Endothelial cell of umbilical vein (primary cell): ENCODE measurements at regions of chr19 and their contacts with region 1.

Region 1: DNA sequence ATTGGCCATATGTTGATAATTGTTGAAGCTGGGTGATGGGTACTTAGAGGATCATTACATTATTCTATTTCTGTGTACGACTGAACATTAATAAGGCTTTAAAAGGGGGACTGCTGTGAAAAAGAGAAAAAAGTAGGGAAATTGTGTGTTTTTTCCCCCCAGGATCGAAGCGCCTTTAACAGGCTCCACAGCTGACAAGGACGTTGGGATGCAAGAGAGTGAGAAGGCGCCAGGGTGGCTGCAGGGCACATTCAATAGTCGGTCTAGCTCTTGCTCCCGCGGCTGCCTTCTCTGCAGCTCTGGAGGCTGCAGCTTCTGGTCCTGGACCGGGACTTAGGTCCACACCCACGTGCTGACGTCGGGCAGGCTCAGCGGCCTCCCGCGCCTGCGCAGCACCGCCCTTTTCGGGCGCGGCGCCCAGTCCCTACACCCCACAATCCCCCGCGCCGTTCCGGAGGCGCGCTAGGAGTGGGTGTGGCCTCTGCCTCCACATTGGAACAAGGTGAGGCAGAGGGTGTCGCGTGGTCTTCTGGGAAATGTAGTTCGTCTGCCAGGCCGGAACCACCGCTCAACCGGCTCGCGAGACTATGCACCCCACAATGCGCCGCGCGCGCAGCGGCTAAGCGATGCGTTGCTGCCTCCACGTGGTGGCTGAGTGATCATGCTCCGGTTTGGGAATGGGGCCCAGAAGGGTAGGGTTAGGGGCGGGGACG is 4.9 kb upstream of the LRFN3 start:
- DNase-seq: peak; percentile 100
- H3K4me3 ChIP-seq: peak overlapping the region in 1 of 3 experiments; percentile 37
- H3K27ac ChIP-seq: no peak overlapping the region
- H3K4me1 ChIP-seq: peaks cover 11% of the 10 kb centered on the region
- H3K27me3 ChIP-seq: no peaks in the 10 kb centered on the region
- CTCF ChIP-seq: peak; percentile 88
- POLR2A ChIP-seq: peak; percentile 98

Region 2: GRCh38 chr19:35509861-35510625 is 421.3 kb before region 1 on chr19:
- CTCF ChIA-PET with region 1: interaction called, 5 read pairs
- POLR2A ChIA-PET with region 1: no interaction called
- dilution Hi-C with region 1: no loop called
- intact Hi-C with region 1: loop called (anchors 1 kb)
- DNase-seq: peak; percentile 30
- H3K4me3 ChIP-seq: no peak overlapping the region
- H3K27ac ChIP-seq: no peak overlapping the region
- H3K4me1 ChIP-seq: no peaks in the 10 kb centered on the region
- H3K27me3 ChIP-seq: peaks cover 33 to 40% of the 10 kb centered on the region in 2 experiments
- CTCF ChIP-seq: peak; percentile 88 to 94
- POLR2A ChIP-seq: no peak

Region 3: GRCh38 chr19:35693830-35694599 is 237.3 kb before region 1 on chr19:
- CTCF ChIA-PET with region 1: interaction called, 6 read pairs
- POLR2A ChIA-PET with region 1: no interaction called
- dilution Hi-C with region 1: no loop called
- intact Hi-C with region 1: loop called (anchors 1 kb)
- DNase-seq: peak; percentile 78
- H3K4me3 ChIP-seq: no peak overlapping the region
- H3K27ac ChIP-seq: no peak overlapping the region
- H3K4me1 ChIP-seq: no peaks in the 10 kb centered on the region
- H3K27me3 ChIP-seq: no peaks in the 10 kb centered on the region
- CTCF ChIP-seq: peak; percentile 97
- POLR2A ChIP-seq: no peak

Region 4: DNA sequence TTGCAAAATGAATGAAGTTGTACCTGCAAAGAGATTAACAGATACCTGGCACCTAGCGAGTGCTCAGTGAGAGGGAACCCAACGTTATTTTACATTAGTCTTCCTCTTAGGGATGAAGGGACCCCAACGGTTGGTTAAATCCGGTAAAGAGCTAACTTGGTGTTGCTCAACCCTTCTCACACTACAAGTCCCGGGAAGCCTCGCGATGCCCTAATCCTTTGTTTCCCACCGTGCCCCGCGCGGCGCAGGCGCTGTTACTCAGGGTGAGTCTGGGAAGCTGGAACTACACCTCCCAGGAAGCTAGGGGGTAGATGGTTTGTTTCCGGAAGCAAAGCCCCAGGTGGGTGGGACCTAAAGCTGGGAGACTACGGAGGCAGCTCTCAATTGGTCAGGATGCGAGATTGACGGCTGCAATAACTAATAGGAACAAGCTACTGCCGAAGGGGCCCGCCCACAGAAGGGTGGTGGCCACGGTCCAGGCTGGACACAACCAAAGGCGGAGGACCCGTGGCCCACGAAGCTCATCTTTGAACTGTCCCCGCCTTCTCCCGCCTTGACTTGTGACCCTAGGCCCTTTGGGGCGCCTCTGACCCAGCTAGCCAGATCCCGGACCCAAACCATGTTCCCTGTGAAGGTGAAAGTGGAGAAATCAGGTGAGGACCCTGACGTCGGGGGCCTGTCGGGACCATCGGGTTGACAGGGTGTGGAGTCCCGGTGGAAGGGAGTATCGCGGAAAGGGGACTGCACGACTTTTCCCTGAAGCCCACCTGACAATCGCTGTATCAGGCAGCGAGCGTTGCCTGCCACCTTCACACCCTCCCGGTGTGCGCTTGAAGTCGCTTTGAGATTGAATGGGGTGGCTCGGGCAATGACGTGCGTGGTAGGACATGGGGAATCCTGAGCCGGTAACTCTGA is 183.0 kb before region 1 on chr19 and contains the start of gene LIN37:
- CTCF ChIA-PET with region 1: interaction called, 6 read pairs
- POLR2A ChIA-PET with region 1: interaction called, 4 read pairs
- dilution Hi-C with region 1: no loop called
- intact Hi-C with region 1: loop called (anchors 1 kb)
- DNase-seq: peak; percentile 100
- H3K4me3 ChIP-seq: peak within 1 kb of the TSS; percentile 78 to 90 (median 81)
- H3K27ac ChIP-seq: peak within 1 kb of the TSS; percentile 58
- H3K4me1 ChIP-seq: peaks cover 19% of the 10 kb centered on the region
- H3K27me3 ChIP-seq: no peaks in the 10 kb centered on the region
- CTCF ChIP-seq: no peak
- POLR2A ChIP-seq: peak; percentile 94
- total RNA-seq, gene LIN37: 11.3 and 15.5 TPM in 2 replicates

Region 5: GRCh38 chr19:35828692-35829301 is 102.5 kb before region 1 on chr19:
- CTCF ChIA-PET with region 1: interaction called, 3 read pairs
- POLR2A ChIA-PET with region 1: no interaction called
- dilution Hi-C with region 1: no loop called
- intact Hi-C with region 1: loop called (anchors 5 kb)
- DNase-seq: peak; percentile 45
- H3K4me3 ChIP-seq: no peak overlapping the region
- H3K27ac ChIP-seq: no peak overlapping the region
- H3K4me1 ChIP-seq: no peaks in the 10 kb centered on the region
- H3K27me3 ChIP-seq: no peaks in the 10 kb centered on the region
- CTCF ChIP-seq: no peak
- POLR2A ChIP-seq: no peak

Region 6: DNA sequence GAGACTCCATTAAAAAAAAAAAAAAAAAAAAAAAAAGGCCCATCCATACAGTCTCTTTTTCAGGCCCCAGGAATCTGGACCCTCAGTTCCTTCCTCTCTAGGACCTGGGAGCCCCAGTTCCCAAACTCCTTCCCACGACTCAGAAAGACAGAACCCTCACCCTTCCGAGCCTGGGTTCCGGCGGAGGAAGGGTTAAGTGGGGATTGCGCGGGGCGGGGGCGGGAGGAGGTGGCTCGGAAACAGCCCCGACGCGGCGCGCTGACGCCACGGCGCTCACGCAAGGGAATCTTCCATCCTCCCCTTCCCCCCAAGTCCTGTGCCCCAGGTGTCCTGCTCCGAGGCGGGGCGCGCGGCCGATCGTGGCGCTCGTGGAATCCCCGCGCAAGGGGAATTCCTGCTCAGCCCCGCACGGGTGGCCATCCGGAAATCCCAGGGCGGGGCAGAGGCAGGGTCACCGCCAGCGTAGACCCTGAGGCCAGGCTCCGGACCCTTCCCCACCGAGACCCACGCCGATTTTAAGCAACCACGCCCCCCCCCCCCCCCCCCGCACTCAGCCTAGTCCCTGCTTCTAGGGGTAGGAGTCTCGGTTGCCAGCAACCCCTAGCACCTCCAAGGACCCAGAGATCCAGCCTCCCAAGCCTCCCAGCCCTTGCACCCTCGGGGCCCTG is 31.6 kb before region 1 on chr19:
- CTCF ChIA-PET with region 1: interaction called, 3 read pairs
- POLR2A ChIA-PET with region 1: no interaction called
- dilution Hi-C with region 1: no loop called
- intact Hi-C with region 1: loop called (anchors 1 kb)
- DNase-seq: peak; percentile 70
- H3K4me3 ChIP-seq: peak overlapping the region; percentile 65 to 96 (median 85)
- H3K27ac ChIP-seq: peak overlapping the region; percentile 65
- H3K4me1 ChIP-seq: peaks cover 16% of the 10 kb centered on the region
- H3K27me3 ChIP-seq: peaks cover 0 to 6% of the 10 kb centered on the region in 2 experiments
- CTCF ChIP-seq: no peak
- POLR2A ChIP-seq: no peak